Endothelial cell of umbilical vein (primary cell): ENCODE measurements at regions of chr5 and their contacts with region 1.

Region 1: DNA sequence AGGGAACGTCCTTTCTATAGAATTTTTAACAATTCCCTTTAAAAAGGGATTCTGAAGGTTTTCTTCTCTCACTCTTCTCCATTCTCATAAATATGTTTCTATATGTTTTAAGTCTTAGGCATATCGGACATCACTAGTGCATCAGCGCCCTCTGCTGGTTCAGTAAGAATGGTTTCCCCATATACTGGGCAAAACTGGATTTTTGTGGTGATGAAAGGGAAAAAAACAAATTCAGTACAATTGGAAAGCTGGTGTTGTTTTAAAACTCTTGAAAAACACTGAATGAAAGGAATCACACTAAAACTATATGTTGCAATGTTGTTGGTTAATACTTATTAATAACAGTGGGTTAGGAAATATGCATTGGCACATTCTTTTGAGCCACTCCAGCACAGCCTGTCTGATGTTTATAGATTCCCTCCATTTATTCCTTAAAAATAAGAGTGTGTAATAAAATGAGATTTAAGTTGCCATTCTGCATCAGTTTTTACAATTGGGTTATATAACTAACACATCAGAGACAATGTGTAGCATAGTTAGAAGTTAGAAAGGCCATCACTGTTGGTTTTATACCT is 15.8 kb downstream of the CWC27 start:
- DNase-seq: peak; percentile 76
- H3K4me3 ChIP-seq: no peak overlapping the region
- H3K27ac ChIP-seq: no peak overlapping the region
- H3K4me1 ChIP-seq: peaks cover 6% of the 10 kb centered on the region
- H3K27me3 ChIP-seq: no peaks in the 10 kb centered on the region
- CTCF ChIP-seq: peak; percentile 62 to 72
- POLR2A ChIP-seq: no peak

Region 2: DNA sequence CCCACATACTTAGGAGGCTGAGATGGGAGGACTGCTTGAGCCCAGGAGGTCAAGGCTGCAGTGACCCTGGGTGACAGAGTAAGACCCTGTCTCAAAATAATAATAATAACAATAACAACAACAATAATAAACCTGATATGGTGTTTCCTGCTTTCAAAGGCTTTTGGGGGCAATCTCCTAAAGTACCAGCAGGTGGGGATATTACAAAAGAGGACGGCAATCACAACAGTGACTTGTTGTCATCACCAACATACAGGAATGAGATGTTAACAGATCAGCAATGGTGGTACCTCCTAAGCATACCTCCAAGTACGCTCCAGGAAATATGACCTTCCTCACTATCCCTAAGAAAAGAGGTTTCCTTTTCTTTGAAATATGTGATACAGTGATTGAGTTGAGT is 710.0 kb before region 1 on chr5:
- CTCF ChIA-PET with region 1: no interaction called
- POLR2A ChIA-PET with region 1: no interaction called
- dilution Hi-C with region 1: no loop called
- intact Hi-C with region 1: loop called (anchors 5 kb)
- DNase-seq: peak; percentile 46
- H3K4me3 ChIP-seq: no peak overlapping the region
- H3K27ac ChIP-seq: no peak overlapping the region
- H3K4me1 ChIP-seq: no peaks in the 10 kb centered on the region
- H3K27me3 ChIP-seq: no peaks in the 10 kb centered on the region
- CTCF ChIP-seq: peak; percentile 60 to 64
- POLR2A ChIP-seq: no peak

Region 3: DNA sequence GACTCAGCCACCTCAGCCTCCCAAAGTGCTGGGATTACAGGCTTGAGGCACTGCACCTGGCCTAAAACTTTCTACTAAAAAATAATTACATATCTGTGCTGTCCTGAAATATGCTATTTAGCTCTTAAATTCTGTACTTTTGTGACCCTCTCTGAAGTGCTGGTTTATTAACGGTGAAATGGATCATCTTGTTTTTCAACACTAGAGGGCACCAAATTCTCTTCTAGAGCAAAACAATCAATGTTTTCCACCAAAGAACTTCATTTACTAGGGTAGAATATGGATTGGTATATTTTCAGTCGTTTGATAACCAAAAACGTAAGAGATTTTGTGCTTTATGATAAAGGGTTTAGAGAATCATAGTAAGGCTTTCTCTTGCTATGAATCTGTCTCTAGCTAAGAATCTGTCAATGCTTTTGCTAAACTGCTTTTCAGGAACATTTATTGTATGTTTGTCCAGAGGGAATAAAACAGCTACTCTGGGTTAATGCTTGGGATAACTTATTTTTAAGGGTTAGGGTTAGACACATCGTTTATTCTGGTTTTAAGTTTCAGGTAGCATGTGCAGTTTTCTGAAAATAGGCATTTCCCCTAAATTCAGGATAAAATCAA is 555.3 kb before region 1 on chr5:
- CTCF ChIA-PET with region 1: interaction called, 11 read pairs
- POLR2A ChIA-PET with region 1: no interaction called
- dilution Hi-C with region 1: no loop called
- intact Hi-C with region 1: loop called (anchors 1 kb)
- DNase-seq: peak; percentile 49
- H3K4me3 ChIP-seq: no peak overlapping the region
- H3K27ac ChIP-seq: no peak overlapping the region
- H3K4me1 ChIP-seq: no peaks in the 10 kb centered on the region
- H3K27me3 ChIP-seq: no peaks in the 10 kb centered on the region
- CTCF ChIP-seq: peak; percentile 24 to 41
- POLR2A ChIP-seq: no peak

Region 4: DNA sequence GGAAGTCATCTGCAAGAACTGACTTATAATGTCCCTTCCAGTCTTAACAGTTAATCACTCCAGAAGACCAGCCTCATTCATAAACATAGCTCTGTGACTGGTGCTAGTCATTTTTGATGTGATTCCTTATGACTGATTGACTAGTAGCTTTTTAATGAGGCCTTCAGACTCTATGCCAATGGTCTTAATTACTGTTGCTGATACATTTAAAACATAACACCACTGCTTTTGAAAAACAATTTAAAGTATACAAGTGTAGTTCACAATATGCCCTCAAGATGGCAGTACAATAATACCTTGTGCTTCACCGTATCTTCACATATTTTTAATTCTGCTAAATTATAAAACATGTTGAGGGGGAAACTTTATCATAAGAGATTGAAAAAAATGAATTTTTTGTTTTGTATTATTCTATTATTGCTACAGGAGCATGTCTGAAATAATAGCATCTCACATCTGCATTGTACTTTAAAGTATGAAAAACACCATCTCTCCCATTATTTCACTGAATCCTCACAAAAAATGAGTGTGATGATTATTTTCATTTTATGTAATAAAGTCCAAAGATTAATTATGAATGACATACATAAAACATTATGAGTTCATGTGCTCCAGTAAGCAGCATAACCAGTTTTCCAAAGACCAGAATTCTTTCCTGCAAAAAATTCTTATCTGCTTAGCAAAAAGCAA is 149.4 kb before region 1 on chr5:
- CTCF ChIA-PET with region 1: interaction called, 10 read pairs
- POLR2A ChIA-PET with region 1: no interaction called
- dilution Hi-C with region 1: no loop called
- intact Hi-C with region 1: loop called (anchors 1 kb)
- DNase-seq: peak; percentile 52
- H3K4me3 ChIP-seq: no peak overlapping the region
- H3K27ac ChIP-seq: no peak overlapping the region
- H3K4me1 ChIP-seq: peaks cover 4% of the 10 kb centered on the region
- H3K27me3 ChIP-seq: peaks cover 26 to 37% of the 10 kb centered on the region in 2 experiments
- CTCF ChIP-seq: peak; percentile 31 to 41
- POLR2A ChIP-seq: no peak

Region 5: GRCh38 chr5:66186108-66186507 is 1401.6 kb after region 1 on chr5:
- CTCF ChIA-PET with region 1: no interaction called
- POLR2A ChIA-PET with region 1: no interaction called
- dilution Hi-C with region 1: no loop called
- intact Hi-C with region 1: loop called (anchors 5 kb)
- DNase-seq: no peak
- H3K4me3 ChIP-seq: no peak overlapping the region
- H3K27ac ChIP-seq: no peak overlapping the region
- H3K4me1 ChIP-seq: no peaks in the 10 kb centered on the region
- H3K27me3 ChIP-seq: no peaks in the 10 kb centered on the region
- CTCF ChIP-seq: no peak
- POLR2A ChIP-seq: no peak